Activated CD8-positive, alpha-beta T cell treated with anti-CD3 and anti-CD28 coated beads, Interleukin-2, amount 10 ng/mL, durations not matched to agents 7 days and 5 days (primary cell): ENCODE measurements at regions of chr20 and their contacts with region 1.

Region 1: GRCh38 chr20:5529331-5530148 is 212.8 kb upstream of the PROKR2 start:
- DNase-seq: peak; percentile 92
- ATAC-seq: peak; percentile 92
- H3K4me3 Mint-ChIP-seq: peak overlapping the region; percentile 21
- H3K27ac Mint-ChIP-seq: peak overlapping the region; percentile 69
- H3K4me1 Mint-ChIP-seq: peaks cover 25% of the 10 kb centered on the region
- H3K27me3 Mint-ChIP-seq: no peaks in the 10 kb centered on the region

Region 2: DNA sequence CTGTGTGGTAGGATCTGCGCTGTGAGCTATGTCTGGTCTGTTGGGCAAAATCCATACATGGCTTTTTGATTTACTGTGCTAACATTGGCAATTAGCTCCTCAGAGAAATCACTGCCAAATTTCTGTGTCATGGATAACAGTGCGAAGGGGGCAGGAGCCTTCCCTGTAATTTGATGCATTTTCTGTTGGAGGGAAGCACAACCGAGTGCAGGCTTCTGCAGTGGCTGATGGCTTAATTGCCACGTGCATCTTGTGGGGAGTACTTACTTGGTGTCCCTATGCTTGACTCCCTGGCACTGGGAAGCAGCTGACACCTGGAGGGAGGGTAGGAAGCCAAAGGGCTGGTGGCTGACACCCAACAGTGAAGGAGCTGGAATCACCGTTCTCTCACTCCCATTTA is 113.5 kb before region 1 on chr20:
- CTCF ChIA-PET with region 1: no interaction called
- POLR2A ChIA-PET with region 1: no interaction called
- DNase-seq: no peak
- ATAC-seq: no peak
- H3K4me3 Mint-ChIP-seq: no peak overlapping the region
- H3K27ac Mint-ChIP-seq: no peak overlapping the region
- H3K4me1 Mint-ChIP-seq: no peaks in the 10 kb centered on the region
- H3K27me3 Mint-ChIP-seq: peaks cover 2% of the 10 kb centered on the region

Region 3: GRCh38 chr20:5543385-5543784 is 13.8 kb after region 1 on chr20:
- CTCF ChIA-PET with region 1: interaction called, 38 read pairs
- POLR2A ChIA-PET with region 1: no interaction called
- DNase-seq: no peak
- ATAC-seq: no peak
- H3K4me3 Mint-ChIP-seq: no peak overlapping the region
- H3K27ac Mint-ChIP-seq: no peak overlapping the region
- H3K4me1 Mint-ChIP-seq: no peaks in the 10 kb centered on the region
- H3K27me3 Mint-ChIP-seq: no peaks in the 10 kb centered on the region

Region 4: GRCh38 chr20:5557123-5557522 is 27.6 kb after region 1 on chr20:
- CTCF ChIA-PET with region 1: interaction called, 38 read pairs
- POLR2A ChIA-PET with region 1: no interaction called
- DNase-seq: peak; percentile 73
- ATAC-seq: peak; percentile 82
- H3K4me3 Mint-ChIP-seq: no peak overlapping the region
- H3K27ac Mint-ChIP-seq: peak overlapping the region; percentile 16
- H3K4me1 Mint-ChIP-seq: no peaks in the 10 kb centered on the region
- H3K27me3 Mint-ChIP-seq: no peaks in the 10 kb centered on the region

Region 5: DNA sequence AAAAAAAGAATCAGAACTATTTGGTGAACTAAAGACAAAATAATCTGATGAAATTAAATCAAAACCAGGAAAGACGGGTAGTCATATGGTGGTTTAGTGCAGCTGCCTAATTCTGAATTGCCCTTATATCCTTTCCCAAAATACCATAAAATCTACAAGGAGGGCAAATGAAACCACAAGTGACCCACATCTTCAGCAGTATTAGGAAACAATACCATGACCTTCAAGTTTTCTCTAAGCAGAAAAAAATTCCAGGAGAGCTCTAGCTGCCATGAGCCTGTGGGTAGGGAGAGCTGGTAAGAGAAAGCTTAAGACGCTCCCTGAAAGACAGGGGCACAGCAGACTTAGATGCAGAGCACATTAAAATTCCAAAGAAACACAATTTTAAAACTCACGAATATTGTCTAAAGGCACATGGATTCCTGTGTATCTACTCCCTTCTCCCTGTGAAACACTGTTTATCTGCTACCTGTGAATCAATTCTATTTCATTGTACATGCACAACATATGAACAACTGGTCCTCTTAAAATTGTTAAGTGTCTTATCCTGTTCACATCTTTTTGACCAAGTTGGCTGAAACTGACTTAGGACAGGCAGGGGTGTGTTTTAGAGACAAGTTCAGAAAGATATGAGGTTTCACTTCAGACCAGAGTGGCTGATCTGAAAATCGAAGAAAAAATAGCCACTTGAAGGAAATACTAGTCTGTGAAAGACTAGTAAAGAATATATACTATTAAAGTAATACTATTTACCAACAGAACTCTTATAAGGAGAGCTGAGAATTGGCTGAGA is 67.1 kb after region 1 on chr20:
- CTCF ChIA-PET with region 1: interaction called, 10 read pairs
- POLR2A ChIA-PET with region 1: no interaction called
- DNase-seq: no peak
- ATAC-seq: no peak
- H3K4me3 Mint-ChIP-seq: no peak overlapping the region
- H3K27ac Mint-ChIP-seq: no peak overlapping the region
- H3K4me1 Mint-ChIP-seq: peaks cover 57% of the 10 kb centered on the region
- H3K27me3 Mint-ChIP-seq: no peaks in the 10 kb centered on the region

Region 6: GRCh38 chr20:5788385-5788895 is 258.9 kb after region 1 on chr20:
- CTCF ChIA-PET with region 1: interaction called, 157 read pairs
- POLR2A ChIA-PET with region 1: no interaction called
- DNase-seq: peak; percentile 89
- ATAC-seq: peak; percentile 96
- H3K4me3 Mint-ChIP-seq: no peak overlapping the region
- H3K27ac Mint-ChIP-seq: no peak overlapping the region
- H3K4me1 Mint-ChIP-seq: peaks cover 12% of the 10 kb centered on the region
- H3K27me3 Mint-ChIP-seq: no peaks in the 10 kb centered on the region

Region 7: DNA sequence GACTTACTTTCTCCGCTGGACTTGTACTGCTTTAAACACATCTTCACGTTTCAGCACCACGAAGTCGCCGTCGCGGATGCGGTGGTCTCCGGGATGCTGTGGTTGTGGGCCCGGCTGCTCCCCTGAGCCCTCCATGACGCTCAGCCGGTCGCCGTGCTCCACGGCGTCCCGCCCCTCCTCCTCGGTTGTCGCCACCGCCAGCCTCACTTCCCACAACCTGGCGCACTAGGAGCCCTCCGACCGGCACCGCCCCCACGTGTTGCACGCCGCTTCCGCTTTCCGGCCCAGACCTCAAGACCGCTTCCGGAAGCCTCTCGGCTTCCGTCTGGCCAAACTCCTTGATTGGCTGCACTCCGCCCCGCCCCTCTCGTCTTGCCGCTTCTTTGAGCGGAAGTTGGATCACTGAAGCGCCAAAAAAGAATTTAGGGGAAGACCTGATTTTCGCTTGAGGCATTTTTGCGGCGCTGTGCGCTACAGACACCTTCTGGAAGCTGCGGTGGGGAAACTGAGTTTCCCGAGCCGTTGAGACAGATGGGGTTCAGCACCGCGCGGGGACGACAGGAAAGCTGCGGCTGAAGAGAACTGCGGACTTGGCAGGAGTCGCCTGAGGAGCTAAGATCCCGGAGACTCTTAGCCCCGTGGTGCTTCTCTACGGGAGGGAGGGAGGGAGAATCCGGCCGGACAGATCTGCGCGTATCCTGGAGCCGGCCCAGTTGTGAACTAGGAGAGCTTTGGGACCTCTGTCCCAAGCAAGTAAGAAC is 420.9 kb after region 1 on chr20 and contains the starts of genes MCM8 and TRMT6:
- CTCF ChIA-PET with region 1: interaction called, 10 read pairs
- POLR2A ChIA-PET with region 1: no interaction called
- DNase-seq: peak; percentile 97
- ATAC-seq: peak; percentile 93
- H3K4me3 Mint-ChIP-seq: peak within 1 kb of the TSS; percentile 93
- H3K27ac Mint-ChIP-seq: peak within 1 kb of the TSS; percentile 96
- H3K4me1 Mint-ChIP-seq: peaks cover 63% of the 10 kb centered on the region
- H3K27me3 Mint-ChIP-seq: peaks cover 2% of the 10 kb centered on the region
- total RNA-seq, gene MCM8: 38.8 to 38.9 TPM
- total RNA-seq, gene TRMT6: 15.9 to 16.1 TPM